ENCODE measurements at regions of chr2 and their contacts with region 1.

Region 1: GRCh38 chr2:86617153-86617552 is 6.5 kb downstream of the RNF103 start:
- DNase-seq: no peak
- ATAC-seq: no peak
- H3K4me3 ChIP-seq: no peak overlapping the region
- H3K27ac ChIP-seq: no peak overlapping the region
- H3K4me1 ChIP-seq: peaks cover 0 to 78% (median 46%) of the 10 kb centered on the region in 9 donors
- H3K27me3 ChIP-seq: no peaks in the 10 kb centered on the region
- CTCF ChIP-seq: no peak

Region 2: GRCh38 chr2:86476092-86476491 is 141.1 kb before region 1 on chr2:
- intact Hi-C with region 1: loop called in 1 of 10 experiments (anchors 10 kb)
- DNase-seq: no peak
- ATAC-seq: no peak
- H3K4me3 ChIP-seq: no peak overlapping the region
- H3K27ac ChIP-seq: peak overlapping the region in 2 of 10 donors; percentile 20 to 27
- H3K4me1 ChIP-seq: peaks cover 4 to 47% (median 25%) of the 10 kb centered on the region in 9 donors
- H3K27me3 ChIP-seq: no peaks in the 10 kb centered on the region
- CTCF ChIP-seq: no peak

Region 3: DNA sequence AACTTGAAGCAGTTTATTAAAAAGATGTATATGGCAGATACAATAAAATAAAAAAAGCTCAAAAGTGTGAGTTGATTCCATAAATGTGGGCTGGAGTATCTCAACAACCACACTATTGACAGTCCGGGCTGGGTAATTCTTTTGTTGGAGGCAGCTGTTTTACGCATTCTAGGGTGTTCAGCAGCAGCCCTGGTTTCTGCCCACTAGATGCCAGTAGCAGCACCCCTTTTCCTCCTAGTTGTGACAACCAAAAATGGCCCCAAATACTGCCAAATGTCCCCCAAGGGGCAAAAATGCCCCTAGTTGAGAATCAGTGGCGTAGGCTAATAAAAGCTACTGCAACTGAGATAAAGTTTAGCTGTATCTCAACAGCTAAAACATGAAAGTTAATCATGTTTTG is 98.7 kb before region 1 on chr2:
- intact Hi-C with region 1: loop called in 4 of 10 experiments (anchors 10 kb)
- DNase-seq: peak in 1 of 2 donors; percentile 36
- ATAC-seq: peak in 7 of 8 donors; percentile 60 to 74 (median 72)
- H3K4me3 ChIP-seq: no peak overlapping the region
- H3K27ac ChIP-seq: no peak overlapping the region
- H3K4me1 ChIP-seq: peaks cover 0 to 13% (median 0%) of the 10 kb centered on the region in 9 donors
- H3K27me3 ChIP-seq: no peaks in the 10 kb centered on the region
- CTCF ChIP-seq: peak; percentile 17 to 65 (median 47)

Region 4: GRCh38 chr2:86541334-86541733 is 75.8 kb before region 1 on chr2:
- intact Hi-C with region 1: no loop called
- DNase-seq: no peak
- ATAC-seq: peak in 4 of 8 donors; percentile 17 to 51 (median 36)
- H3K4me3 ChIP-seq: no peak overlapping the region
- H3K27ac ChIP-seq: peak overlapping the region in 2 of 10 donors; percentile 17 to 34
- H3K4me1 ChIP-seq: peaks cover 0 to 43% (median 30%) of the 10 kb centered on the region in 9 donors
- H3K27me3 ChIP-seq: no peaks in the 10 kb centered on the region
- CTCF ChIP-seq: no peak

Region 5: GRCh38 chr2:86562922-86563649 is 54.1 kb before region 1 on chr2 and contains the start of gene CHMP3:
- intact Hi-C with region 1: loop called in 3 of 10 experiments (anchors 2 to 10 kb)
- DNase-seq: peak; percentile 97 to 98
- ATAC-seq: peak; percentile 97 to 99 (median 98)
- H3K4me3 ChIP-seq: peak within 1 kb of the TSS; percentile 49 to 86 (median 68)
- H3K27ac ChIP-seq: peak within 1 kb of the TSS; percentile 97 to 100 (median 98)
- H3K4me1 ChIP-seq: peaks cover 4 to 51% (median 33%) of the 10 kb centered on the region in 9 donors
- H3K27me3 ChIP-seq: no peaks in the 10 kb centered on the region
- CTCF ChIP-seq: no peak
- total RNA-seq, gene CHMP3: 129 to 180 (median 160) TPM